Heart left ventricle (tissue), 16 donors: ENCODE measurements at regions of chr17 and their contacts with region 1.

Region 1: GRCh38 chr17:17972126-17972951 is at the starts of genes DRC3 and TOM1L2:
- DNase-seq: peak; percentile 100
- ATAC-seq: peak; percentile 97 to 98 (median 98)
- H3K4me3 ChIP-seq: peak within 1 kb of the TSS; percentile 71 to 98 (median 91)
- H3K27ac ChIP-seq: peak within 1 kb of the TSS; percentile 66 to 95 (median 93)
- H3K4me1 ChIP-seq: peaks cover 3 to 46% (median 29%) of the 10 kb centered on the region in 12 donors
- H3K27me3 ChIP-seq: no peaks in the 10 kb centered on the region
- CTCF ChIP-seq: peak in 7 of 12 donors; percentile 4 to 57 (median 39)
- POLR2A ChIP-seq: peak; percentile 96
- total RNA-seq, gene DRC3: 0.42 to 3.7 (median 1.00) TPM
- total RNA-seq, gene TOM1L2: 210 to 345 (median 247) TPM

Region 2: DNA sequence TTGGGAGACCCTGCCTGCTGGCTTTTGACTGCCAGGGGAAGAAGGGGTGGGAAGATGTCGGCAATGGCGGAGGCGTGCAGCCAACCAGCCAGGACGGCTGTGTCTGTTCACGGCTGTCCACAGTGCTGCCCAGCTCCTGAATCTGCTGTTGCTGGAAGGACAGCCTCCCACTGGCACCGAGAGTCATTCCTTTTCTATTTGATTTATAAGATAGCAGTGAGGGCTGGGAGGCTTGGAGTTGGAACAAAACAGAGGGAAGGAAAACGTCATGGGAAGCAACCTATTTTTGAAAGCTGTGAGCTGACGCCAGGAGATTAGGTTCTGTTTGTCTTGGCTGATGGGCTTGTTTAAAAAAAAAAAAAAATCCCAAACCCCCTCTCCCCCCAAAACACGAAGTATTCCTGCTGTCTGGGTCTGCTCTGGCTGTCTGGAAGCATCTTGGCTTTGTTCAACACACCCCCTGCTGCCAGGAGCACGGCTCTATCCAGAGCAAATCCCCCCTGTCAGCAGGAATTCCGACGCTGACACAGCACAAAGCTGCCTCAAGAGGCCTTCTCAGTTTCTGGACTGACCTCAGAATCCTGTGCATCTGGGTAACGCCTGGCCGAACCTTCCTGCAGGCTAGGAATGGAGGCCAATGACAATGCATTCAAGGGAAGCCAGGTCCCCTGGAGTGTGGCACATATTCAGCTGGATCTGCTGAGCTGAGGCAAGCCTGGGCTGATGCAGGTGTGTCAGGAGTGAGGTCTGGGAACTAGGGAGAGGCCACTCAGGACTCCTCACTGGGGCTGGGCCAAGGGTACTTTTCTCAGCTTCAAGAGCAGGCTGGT is 94.6 kb before region 1 on chr17:
- intact Hi-C with region 1: loop called in 2 of 10 experiments (anchors 5 to 10 kb)
- DNase-seq: peak; percentile 84 to 92 (median 85)
- ATAC-seq: peak; percentile 86 to 88 (median 88)
- H3K4me3 ChIP-seq: peak overlapping the region in 2 of 12 donors; percentile 8 to 21
- H3K27ac ChIP-seq: peak overlapping the region; percentile 71 to 98 (median 90)
- H3K4me1 ChIP-seq: peaks cover 16 to 66% (median 50%) of the 10 kb centered on the region in 12 donors
- H3K27me3 ChIP-seq: no peaks in the 10 kb centered on the region
- CTCF ChIP-seq: peak in 4 of 12 donors; percentile 21 to 39 (median 24)
- POLR2A ChIP-seq: no peak

Region 3: GRCh38 chr17:17919169-17920107 is 52.9 kb before region 1 on chr17:
- intact Hi-C with region 1: loop called in 4 of 10 experiments (anchors 2 to 5 kb)
- DNase-seq: peak; percentile 74 to 83 (median 75)
- ATAC-seq: peak; percentile 54 to 78 (median 60)
- H3K4me3 ChIP-seq: no peak overlapping the region
- H3K27ac ChIP-seq: peak overlapping the region in 6 of 12 donors; percentile 15 to 88 (median 34)
- H3K4me1 ChIP-seq: peaks cover 0 to 58% (median 42%) of the 10 kb centered on the region in 12 donors
- H3K27me3 ChIP-seq: no peaks in the 10 kb centered on the region
- CTCF ChIP-seq: peak; percentile 60 to 82 (median 73)
- POLR2A ChIP-seq: no peak

Region 4: GRCh38 chr17:18025945-18026776 is 53.8 kb after region 1 on chr17:
- intact Hi-C with region 1: loop called in 3 of 10 experiments (anchors 2 to 10 kb)
- DNase-seq: peak; percentile 49 to 80 (median 71)
- ATAC-seq: peak in 3 of 4 donors; percentile 75 to 87 (median 80)
- H3K4me3 ChIP-seq: no peak overlapping the region
- H3K27ac ChIP-seq: peak overlapping the region in 6 of 12 donors; percentile 19 to 91 (median 84)
- H3K4me1 ChIP-seq: peaks cover 0 to 42% (median 14%) of the 10 kb centered on the region in 12 donors
- H3K27me3 ChIP-seq: no peaks in the 10 kb centered on the region
- CTCF ChIP-seq: no peak
- POLR2A ChIP-seq: no peak

Region 5: DNA sequence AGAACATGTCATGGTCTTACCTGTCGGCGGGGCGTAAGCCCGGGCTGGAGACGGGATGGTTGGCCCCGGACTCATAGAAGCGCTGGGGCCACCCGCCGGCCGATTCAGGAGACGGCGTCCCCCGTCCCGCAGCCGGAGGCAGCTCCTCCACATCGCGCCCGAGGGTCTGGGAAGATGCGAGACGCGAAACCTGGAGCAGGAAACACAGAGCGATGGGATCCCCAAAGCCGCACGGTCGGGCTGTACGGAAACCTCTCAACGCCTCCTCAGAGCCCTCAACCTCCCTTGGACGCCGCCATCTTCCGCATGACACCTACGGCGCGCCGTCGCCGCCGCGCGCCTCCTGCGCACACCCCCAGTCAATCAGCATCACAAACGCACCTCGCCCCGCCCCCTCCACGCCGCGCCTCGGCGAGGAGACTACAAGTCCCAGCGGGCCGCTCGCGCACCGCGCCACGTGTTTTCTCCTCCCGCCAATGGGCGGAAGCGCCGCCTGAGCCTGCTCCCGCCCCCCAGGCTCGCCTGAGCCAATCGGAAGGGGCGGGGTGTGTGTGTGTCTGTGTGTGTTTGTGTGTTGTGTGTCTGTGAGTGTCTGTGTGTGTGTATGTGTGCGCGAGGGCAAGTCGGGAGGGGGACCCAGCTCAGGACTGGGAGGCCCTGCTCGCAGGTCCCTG is 66.7 kb after region 1 on chr17 and contains the starts of genes ATPAF2 and GID4:
- intact Hi-C with region 1: loop called in 4 of 10 experiments (anchors 2 to 10 kb)
- DNase-seq: peak; percentile 99 to 100 (median 100)
- ATAC-seq: peak; percentile 97 to 99 (median 97)
- H3K4me3 ChIP-seq: peak within 1 kb of the TSS; percentile 72 to 95 (median 88)
- H3K27ac ChIP-seq: peak within 1 kb of the TSS; percentile 68 to 89 (median 75)
- H3K4me1 ChIP-seq: peaks cover 0 to 57% (median 32%) of the 10 kb centered on the region in 12 donors
- H3K27me3 ChIP-seq: no peaks in the 10 kb centered on the region
- CTCF ChIP-seq: no peak
- POLR2A ChIP-seq: peak in 1 of 2 donors; percentile 47
- total RNA-seq, gene ATPAF2: 25.6 to 46.2 (median 37.6) TPM
- total RNA-seq, gene GID4: 15.3 to 27.7 (median 18.2) TPM